ENCODE measurements at regions of chr11 and their contacts with region 1.

Region 1: DNA sequence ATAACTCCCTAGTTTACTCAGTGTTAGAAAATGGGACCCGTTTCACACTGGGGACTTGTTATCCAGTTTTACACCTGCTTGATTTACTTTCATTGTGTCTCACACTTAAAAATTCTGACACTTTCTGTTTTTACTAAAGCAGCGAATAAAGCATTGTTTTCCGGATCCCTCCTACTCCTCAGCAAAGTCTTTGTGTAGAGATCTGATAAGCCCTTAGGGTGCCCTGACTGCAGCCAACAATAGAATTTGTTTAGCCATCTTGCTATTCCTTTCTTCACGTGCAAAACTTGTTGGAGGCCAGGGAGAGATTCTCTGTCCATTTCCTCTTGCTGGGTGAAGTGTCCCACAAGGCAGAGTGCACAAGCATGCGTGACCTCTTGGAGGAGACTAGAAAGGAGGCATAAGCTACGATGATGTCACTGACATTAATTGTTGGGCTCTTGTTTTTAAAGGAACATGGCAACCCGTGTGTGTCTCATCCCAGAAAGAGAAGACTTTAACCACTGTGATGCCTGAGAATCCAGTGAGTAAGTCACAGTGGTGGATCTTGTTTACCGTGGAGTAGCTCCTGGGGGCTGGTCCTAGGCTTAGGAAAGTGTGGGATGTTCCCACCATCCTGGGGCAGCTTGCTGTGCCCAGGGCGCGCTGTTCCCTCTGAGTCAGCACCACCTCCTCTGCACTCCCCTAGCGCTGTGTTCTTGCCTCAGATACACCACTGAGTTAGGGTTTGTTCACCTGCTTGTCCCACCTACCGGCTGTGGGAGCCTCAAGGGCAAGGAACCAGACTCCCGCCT is 27.7 kb downstream of the MICAL2 start:
- DNase-seq: peak; percentile 52 to 90
- H3K4me3 ChIP-seq: peak overlapping the region in 1 of 2 donors; percentile 16
- H3K27ac ChIP-seq: peak overlapping the region; percentile 88 to 89
- H3K4me1 ChIP-seq: peaks cover 41 to 85% of the 10 kb centered on the region in 2 donors
- H3K27me3 ChIP-seq: no peaks in the 10 kb centered on the region
- CTCF ChIP-seq: no peak

Region 2: DNA sequence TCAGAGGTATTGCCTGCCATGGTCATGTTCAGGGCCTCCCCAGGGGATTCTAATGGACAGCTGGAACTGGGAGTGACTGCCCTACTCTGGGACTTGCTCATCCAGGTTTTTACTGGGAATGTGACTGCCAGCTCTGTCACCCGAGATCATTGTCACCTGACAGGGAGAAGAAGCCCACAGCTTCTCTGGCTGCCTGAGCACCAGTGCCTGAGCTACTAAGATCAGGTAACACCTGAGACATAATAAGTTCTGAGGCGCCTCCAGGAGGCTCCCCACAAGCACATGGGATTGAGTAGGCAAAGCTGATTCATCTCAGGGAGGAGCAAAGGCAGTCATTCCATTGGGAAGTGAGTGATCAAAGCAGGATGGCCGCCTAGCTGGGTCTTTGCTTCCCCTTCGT is 432.1 kb before region 1 on chr11:
- intact Hi-C with region 1: no loop called
- DNase-seq: no peak
- H3K4me3 ChIP-seq: no peak overlapping the region
- H3K27ac ChIP-seq: no peak overlapping the region
- H3K4me1 ChIP-seq: no peaks in the 10 kb centered on the region
- H3K27me3 ChIP-seq: no peaks in the 10 kb centered on the region
- CTCF ChIP-seq: no peak

Region 3: DNA sequence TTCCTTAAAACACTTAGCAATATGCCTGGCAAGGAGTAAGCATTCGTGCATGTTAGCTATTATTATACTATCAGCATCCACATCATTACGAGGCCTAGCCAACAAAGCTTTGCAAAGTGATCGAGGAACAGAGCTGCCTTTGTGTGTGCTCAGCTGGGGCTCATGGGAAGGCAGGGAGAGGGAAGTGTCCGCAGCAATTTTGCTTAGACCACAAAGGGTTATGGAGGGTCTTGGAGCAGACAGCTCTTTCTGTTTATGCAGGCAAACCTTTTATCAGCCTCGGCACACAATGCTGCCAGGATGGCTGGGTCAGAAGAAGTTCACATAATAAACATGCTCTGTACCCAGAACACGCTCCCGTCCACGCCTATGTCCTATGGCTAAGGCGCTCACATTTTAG is 118.8 kb before region 1 on chr11:
- intact Hi-C with region 1: no loop called
- DNase-seq: no peak
- H3K4me3 ChIP-seq: peak overlapping the region in 1 of 2 donors; percentile 42
- H3K27ac ChIP-seq: peak overlapping the region; percentile 72 to 78
- H3K4me1 ChIP-seq: peaks cover 16 to 33% of the 10 kb centered on the region in 2 donors
- H3K27me3 ChIP-seq: no peaks in the 10 kb centered on the region
- CTCF ChIP-seq: no peak

Region 4: DNA sequence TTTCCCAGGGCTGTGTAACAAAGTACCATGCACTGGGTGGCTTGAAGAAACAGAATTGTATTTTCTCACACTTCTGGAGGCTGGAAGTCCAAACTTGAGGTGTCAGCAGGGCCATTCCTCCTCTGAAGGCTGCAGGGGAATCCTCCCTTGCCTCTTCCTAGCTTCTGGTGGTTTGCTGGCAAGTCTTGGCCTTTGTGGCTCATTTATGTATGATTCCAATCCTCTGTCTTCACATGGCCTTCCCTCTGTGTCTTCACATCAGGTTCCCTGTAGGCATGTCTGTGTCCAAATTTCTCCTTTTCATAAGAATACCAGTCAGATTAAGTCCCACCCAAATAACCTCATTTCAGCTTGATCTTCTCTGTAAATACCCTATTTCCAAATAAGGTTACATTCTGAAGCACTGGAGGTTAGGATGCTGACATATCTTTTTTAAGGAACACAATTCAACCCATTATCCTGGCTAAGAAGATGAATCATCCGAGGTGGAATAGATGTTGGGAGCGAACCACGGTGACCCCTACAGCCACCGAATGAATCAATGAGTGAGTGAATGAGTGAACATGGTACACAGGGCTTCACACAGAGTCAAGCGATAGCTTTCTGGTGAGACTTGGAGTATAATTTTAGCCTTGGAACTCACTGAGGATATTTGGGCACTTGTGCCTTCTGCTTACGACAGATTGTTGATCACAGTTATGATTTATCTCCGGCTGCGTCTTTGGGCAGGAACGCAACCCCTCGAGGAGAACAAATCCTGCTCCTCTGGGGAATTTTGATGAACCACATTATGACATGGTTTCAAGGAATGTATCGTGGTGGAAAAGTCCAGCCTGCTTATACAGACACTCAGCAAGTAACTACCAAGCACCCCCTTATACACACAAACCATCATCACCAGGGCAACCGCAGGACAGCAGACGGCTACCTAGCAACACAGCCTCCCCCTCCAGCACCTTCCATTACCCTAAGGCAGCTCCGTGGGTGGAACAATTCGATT is 62.0 kb before region 1 on chr11:
- intact Hi-C with region 1: loop called (anchors 2 kb)
- DNase-seq: peak in 1 of 2 donors; percentile 93
- H3K4me3 ChIP-seq: no peak overlapping the region
- H3K27ac ChIP-seq: peak overlapping the region; percentile 83 to 91
- H3K4me1 ChIP-seq: peaks cover 16 to 42% of the 10 kb centered on the region in 2 donors
- H3K27me3 ChIP-seq: no peaks in the 10 kb centered on the region
- CTCF ChIP-seq: no peak

Region 5: DNA sequence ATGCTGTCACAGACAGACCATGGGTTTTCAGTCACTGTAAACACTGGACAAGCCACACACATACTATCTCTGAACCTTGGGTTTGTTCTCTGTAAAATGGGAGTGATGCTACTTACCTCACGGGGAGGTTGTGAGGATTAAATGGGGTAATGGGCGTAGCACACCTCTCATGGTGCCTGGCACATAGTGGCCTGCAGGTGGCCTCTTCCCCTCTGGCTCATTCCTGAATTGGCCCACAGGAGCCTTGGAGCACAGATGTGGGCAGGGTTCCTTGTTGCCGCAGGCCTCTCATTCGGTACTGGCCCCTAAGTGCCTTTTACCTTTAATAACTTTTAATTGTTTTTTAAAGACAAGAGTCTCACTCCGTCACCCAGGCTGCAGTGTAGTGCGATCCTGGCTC is 16.1 kb before region 1 on chr11:
- intact Hi-C with region 1: loop called (anchors 2 kb)
- DNase-seq: peak in 1 of 2 donors; percentile 4
- H3K4me3 ChIP-seq: peak overlapping the region in 1 of 2 donors; percentile 14
- H3K27ac ChIP-seq: peak overlapping the region; percentile 71 to 92
- H3K4me1 ChIP-seq: peaks cover 33 to 93% of the 10 kb centered on the region in 2 donors
- H3K27me3 ChIP-seq: no peaks in the 10 kb centered on the region
- CTCF ChIP-seq: peak; percentile 58 to 65 (median 61)

Region 6: GRCh38 chr11:12331239-12331874 is 193.2 kb after region 1 on chr11:
- intact Hi-C with region 1: no loop called
- DNase-seq: peak in 1 of 2 donors; percentile 88
- H3K4me3 ChIP-seq: no peak overlapping the region
- H3K27ac ChIP-seq: no peak overlapping the region
- H3K4me1 ChIP-seq: peaks cover 0 to 3% of the 10 kb centered on the region in 2 donors
- H3K27me3 ChIP-seq: no peaks in the 10 kb centered on the region
- CTCF ChIP-seq: peak; percentile 63 to 78 (median 74)

Region 7: DNA sequence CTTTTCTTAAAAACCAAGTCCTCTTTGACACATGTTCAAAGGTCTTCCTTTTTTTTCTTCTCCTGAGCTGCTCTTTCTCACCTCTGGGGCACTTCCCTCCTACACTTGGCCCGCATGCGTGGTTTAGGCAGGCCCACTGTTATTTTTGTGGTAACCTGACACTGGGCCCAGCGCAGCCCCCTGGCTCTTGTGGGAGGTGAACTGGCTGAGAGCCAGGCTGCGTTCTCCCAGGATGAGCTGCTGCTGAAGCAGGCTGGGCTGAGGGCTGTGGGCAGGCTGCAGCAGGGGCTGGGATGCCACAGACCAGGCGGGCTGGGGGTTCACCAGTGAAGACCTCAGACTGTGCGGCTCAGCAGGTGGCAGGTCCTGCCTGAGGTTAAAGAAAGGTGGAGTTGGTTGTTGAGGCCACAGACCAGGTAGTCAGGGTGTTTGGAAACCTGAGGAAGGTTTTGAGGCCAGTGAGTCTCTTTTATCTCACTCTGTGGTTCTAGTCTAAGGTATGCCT is 608.5 kb after region 1 on chr11:
- intact Hi-C with region 1: no loop called
- DNase-seq: peak in 1 of 2 donors; percentile 68
- H3K4me3 ChIP-seq: no peak overlapping the region
- H3K27ac ChIP-seq: no peak overlapping the region
- H3K4me1 ChIP-seq: peaks cover 2 to 3% of the 10 kb centered on the region in 2 donors
- H3K27me3 ChIP-seq: no peaks in the 10 kb centered on the region
- CTCF ChIP-seq: no peak

Measured in ascending aorta (tissue), 2 donors.